GM10248 (cell line): ENCODE measurements at regions of chr22 and their contacts with region 1.

Region 1: DNA sequence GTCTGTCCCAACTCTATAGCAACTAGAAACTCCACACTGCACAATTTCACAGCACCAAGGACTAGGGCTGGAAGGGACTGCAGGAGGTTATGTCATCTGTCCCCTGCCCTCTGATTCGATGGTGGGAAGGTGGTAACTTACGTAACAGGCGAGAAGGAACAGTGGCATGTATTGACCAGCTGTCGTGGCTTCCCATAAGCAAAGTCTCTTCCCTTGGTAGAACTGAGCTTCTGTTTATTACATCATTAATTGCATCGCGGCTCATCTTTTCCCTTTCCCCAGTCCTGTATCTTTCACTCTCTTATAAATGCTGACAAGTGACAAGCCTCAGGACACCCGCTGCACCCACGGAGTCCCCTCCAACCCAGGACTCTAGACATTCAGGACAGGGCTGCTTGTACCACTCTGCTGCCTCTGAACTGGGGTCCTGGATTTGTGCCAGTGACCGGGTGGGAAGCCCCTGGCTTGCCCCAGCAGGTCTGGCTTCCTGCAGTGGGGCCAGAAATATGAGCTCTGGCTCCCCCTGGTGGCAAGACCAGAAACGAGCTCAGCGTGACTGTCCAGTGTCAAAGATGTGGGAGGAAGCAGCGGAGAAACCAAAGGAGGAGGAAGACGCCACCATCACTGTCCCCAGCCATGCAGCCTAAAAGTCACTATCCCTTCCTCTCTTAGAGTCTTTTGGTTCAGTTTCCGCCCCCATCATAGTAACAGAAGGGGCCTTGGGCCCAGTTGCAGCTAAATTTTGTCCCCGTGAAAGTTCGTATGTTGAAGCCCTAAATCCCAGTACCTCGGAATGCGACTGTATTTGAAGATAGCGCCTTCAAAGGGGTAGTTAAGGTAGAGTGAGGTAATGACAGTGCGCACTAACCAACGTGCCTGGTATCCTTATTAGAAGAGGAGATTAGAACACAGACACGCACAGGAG is 84.5 kb downstream of the ISX start:
- DNase-seq: peak; percentile 64
- CTCF ChIP-seq: peak; percentile 86

Region 2: GRCh38 chr22:34414484-34415440 is 735.7 kb before region 1 on chr22:
- CTCF ChIA-PET with region 1: interaction called, 52 read pairs
- POLR2A ChIA-PET with region 1: no interaction called
- DNase-seq: peak; percentile 16
- CTCF ChIP-seq: peak; percentile 72

Region 3: GRCh38 chr22:35023692-35024363 is 126.6 kb before region 1 on chr22:
- CTCF ChIA-PET with region 1: interaction called, 38 read pairs
- POLR2A ChIA-PET with region 1: no interaction called
- DNase-seq: peak; percentile 79
- CTCF ChIP-seq: peak; percentile 96

Region 4: GRCh38 chr22:35076630-35077029 is 73.8 kb before region 1 on chr22:
- CTCF ChIA-PET with region 1: interaction called, 10 read pairs
- POLR2A ChIA-PET with region 1: no interaction called
- DNase-seq: no peak
- CTCF ChIP-seq: no peak

Region 5: GRCh38 chr22:35116817-35117216 is 33.6 kb before region 1 on chr22:
- CTCF ChIA-PET with region 1: interaction called, 18 read pairs
- POLR2A ChIA-PET with region 1: no interaction called
- DNase-seq: no peak
- CTCF ChIP-seq: no peak

Region 6: GRCh38 chr22:35170716-35171697 is 20.6 kb after region 1 on chr22:
- CTCF ChIA-PET with region 1: interaction called, 10 read pairs
- POLR2A ChIA-PET with region 1: no interaction called
- DNase-seq: no peak
- CTCF ChIP-seq: no peak